Endothelial cell of umbilical vein (primary cell): ENCODE measurements at regions of chr13 and their contacts with region 1.

Region 1: GRCh38 chr13:44710576-44710975 is 134.4 kb upstream of the TSC22D1 start:
- DNase-seq: peak; percentile 92
- H3K4me3 ChIP-seq: peak overlapping the region in 1 of 3 experiments; percentile 29
- H3K27ac ChIP-seq: peak overlapping the region; percentile 91
- H3K4me1 ChIP-seq: peaks cover 38% of the 10 kb centered on the region
- H3K27me3 ChIP-seq: no peaks in the 10 kb centered on the region
- CTCF ChIP-seq: no peak
- POLR2A ChIP-seq: no peak

Region 2: GRCh38 chr13:44484562-44485138 is 225.9 kb before region 1 on chr13:
- CTCF ChIA-PET with region 1: interaction called, 11 read pairs
- POLR2A ChIA-PET with region 1: no interaction called
- dilution Hi-C with region 1: no loop called
- intact Hi-C with region 1: loop called (anchors 5 kb)
- DNase-seq: peak; percentile 9
- H3K4me3 ChIP-seq: no peak overlapping the region
- H3K27ac ChIP-seq: no peak overlapping the region
- H3K4me1 ChIP-seq: peaks cover 10% of the 10 kb centered on the region
- H3K27me3 ChIP-seq: no peaks in the 10 kb centered on the region
- CTCF ChIP-seq: no peak
- POLR2A ChIP-seq: no peak

Region 3: DNA sequence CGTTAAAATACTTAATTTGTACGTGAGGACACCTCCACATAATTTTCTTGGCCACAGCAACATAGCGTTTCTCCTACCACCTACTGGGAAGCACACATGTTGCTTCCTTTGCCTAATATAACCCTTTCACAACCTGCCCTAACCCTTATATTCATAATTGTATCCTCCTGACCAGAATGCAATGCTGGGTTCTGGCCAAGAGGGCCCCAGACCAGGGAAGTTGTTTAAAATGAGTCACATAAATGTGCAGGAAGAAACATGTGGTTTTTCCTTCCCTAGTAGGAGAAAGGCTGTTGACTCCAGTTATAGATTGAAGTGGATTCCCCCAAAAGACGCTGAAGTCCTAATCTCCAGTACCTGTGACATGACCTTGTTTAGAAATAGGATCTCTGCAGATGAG is 91.4 kb after region 1 on chr13:
- CTCF ChIA-PET with region 1: no interaction called
- POLR2A ChIA-PET with region 1: no interaction called
- dilution Hi-C with region 1: no loop called
- intact Hi-C with region 1: loop called (anchors 2 kb)
- DNase-seq: peak; percentile 92
- H3K4me3 ChIP-seq: no peak overlapping the region
- H3K27ac ChIP-seq: no peak overlapping the region
- H3K4me1 ChIP-seq: peaks cover 20% of the 10 kb centered on the region
- H3K27me3 ChIP-seq: no peaks in the 10 kb centered on the region
- CTCF ChIP-seq: no peak
- POLR2A ChIP-seq: no peak

Region 4: DNA sequence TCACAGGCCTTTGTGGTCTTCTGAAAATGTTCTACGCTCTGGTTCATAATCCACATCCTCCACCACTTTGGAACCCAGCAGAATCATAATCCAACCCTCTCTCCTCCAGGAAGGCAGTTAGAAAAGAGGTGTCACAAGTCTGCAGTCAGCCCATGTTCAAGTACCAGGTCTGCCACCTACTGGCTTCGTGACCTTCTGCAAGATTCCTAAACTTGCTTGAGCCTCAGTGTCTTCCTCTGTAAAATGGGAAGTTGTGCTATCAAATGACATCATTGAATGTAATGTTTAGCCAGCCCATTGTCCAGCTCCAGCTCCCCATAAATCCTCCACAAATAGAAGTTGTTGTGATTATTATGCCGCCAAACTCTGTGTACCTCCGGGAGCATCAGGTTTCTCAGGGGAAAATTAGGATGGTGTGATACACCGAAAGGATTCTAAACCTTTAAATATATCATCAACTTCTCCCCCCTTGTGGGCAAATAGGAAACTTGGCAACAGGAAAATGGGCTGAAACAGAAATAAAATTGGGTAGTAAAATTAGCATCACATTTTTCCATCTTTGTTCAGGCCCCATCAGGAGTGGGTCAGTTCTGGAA is 169.0 kb after region 1 on chr13:
- CTCF ChIA-PET with region 1: interaction called, 4 read pairs
- POLR2A ChIA-PET with region 1: no interaction called
- dilution Hi-C with region 1: no loop called
- intact Hi-C with region 1: loop called (anchors 2 kb)
- DNase-seq: peak; percentile 48
- H3K4me3 ChIP-seq: no peak overlapping the region
- H3K27ac ChIP-seq: no peak overlapping the region
- H3K4me1 ChIP-seq: peaks cover 12% of the 10 kb centered on the region
- H3K27me3 ChIP-seq: no peaks in the 10 kb centered on the region
- CTCF ChIP-seq: peak; percentile 47 to 52
- POLR2A ChIP-seq: no peak

Region 5: GRCh38 chr13:44930963-44931623 is 220.5 kb after region 1 on chr13:
- CTCF ChIA-PET with region 1: interaction called, 4 read pairs
- POLR2A ChIA-PET with region 1: no interaction called
- dilution Hi-C with region 1: no loop called
- intact Hi-C with region 1: loop called (anchors 5 kb)
- DNase-seq: no peak
- H3K4me3 ChIP-seq: no peak overlapping the region
- H3K27ac ChIP-seq: peak overlapping the region; percentile 94
- H3K4me1 ChIP-seq: peaks cover 63% of the 10 kb centered on the region
- H3K27me3 ChIP-seq: no peaks in the 10 kb centered on the region
- CTCF ChIP-seq: no peak
- POLR2A ChIP-seq: no peak

Region 6: GRCh38 chr13:45036206-45036605 is 325.6 kb after region 1 on chr13:
- CTCF ChIA-PET with region 1: no interaction called
- POLR2A ChIA-PET with region 1: no interaction called
- dilution Hi-C with region 1: no loop called
- intact Hi-C with region 1: no loop called
- DNase-seq: no peak
- H3K4me3 ChIP-seq: no peak overlapping the region
- H3K27ac ChIP-seq: no peak overlapping the region
- H3K4me1 ChIP-seq: peaks cover 5% of the 10 kb centered on the region
- H3K27me3 ChIP-seq: no peaks in the 10 kb centered on the region
- CTCF ChIP-seq: no peak
- POLR2A ChIP-seq: no peak